Naive thymus-derived CD4-positive, alpha-beta T cell (primary cell): ENCODE measurements at regions of chr15 and their contacts with region 1.

Region 1: GRCh38 chr15:34209421-34210282 is at the start of gene KATNBL1:
- DNase-seq: peak; percentile 81 to 98 (median 89)
- ATAC-seq: peak; percentile 100
- H3K4me3 ChIP-seq: peak within 1 kb of the TSS; percentile 69
- H3K4me3 Mint-ChIP-seq: peak within 1 kb of the TSS; percentile 84 to 94 (median 91)
- H3K27ac ChIP-seq: peak within 1 kb of the TSS; percentile 77
- H3K27ac Mint-ChIP-seq: peak within 1 kb of the TSS; percentile 28 to 93 (median 84)
- H3K4me1 ChIP-seq: peaks cover 0 to 5% of the 10 kb centered on the region in 2 donors
- H3K4me1 Mint-ChIP-seq: peaks cover 8 to 33% (median 25%) of the 10 kb centered on the region in 7 donors
- H3K27me3 ChIP-seq: no peaks in the 10 kb centered on the region
- H3K27me3 Mint-ChIP-seq: peaks cover 0 to 4% (median 0%) of the 10 kb centered on the region in 5 donors
- total RNA-seq, gene KATNBL1: 21.8 to 40.3 (median 33.0) TPM

Region 2: DNA sequence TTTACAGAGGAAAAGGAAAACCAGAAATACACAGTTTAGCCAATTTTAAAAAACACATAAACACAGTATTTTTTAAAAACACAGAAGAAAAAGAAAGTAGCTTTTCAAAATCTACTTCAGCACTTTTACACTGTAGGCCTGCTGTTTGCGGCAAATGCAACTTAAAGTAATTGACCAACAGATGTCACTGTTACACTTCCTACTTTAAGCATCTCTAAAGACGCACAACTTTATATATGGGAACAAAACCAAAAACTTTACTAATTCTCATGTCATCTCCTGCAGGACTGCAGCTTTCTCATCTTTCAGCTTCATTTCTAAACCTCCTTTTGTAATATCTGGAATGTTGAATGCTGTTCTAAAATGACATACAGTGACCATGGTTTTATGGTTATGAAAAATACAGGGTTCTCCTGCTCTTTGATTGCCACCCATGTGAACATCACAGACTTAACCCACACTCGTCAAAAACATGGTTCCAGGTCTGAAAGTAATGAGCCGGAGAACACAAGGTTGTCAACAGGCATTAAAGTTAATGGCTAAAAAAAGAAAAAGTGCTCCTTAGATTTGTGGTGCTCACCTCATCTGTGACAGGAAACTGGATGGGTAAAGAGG is 1123.0 kb before region 1 on chr15:
- CTCF ChIA-PET with region 1: no interaction called
- POLR2A ChIA-PET with region 1: no interaction called
- intact Hi-C with region 1: loop called in 1 of 2 experiments (anchors 10 kb)
- DNase-seq: peak in 5 of 9 donors; percentile 9 to 70 (median 48)
- ATAC-seq: peak; percentile 87
- H3K4me3 ChIP-seq: no peak overlapping the region
- H3K4me3 Mint-ChIP-seq: peak overlapping the region in 4 of 10 donors; percentile 27 to 77 (median 55)
- H3K27ac ChIP-seq: no peak overlapping the region
- H3K27ac Mint-ChIP-seq: peak overlapping the region in 2 of 9 donors; percentile 24 to 87
- H3K4me1 ChIP-seq: no peaks in the 10 kb centered on the region
- H3K4me1 Mint-ChIP-seq: peaks cover 0 to 39% (median 11%) of the 10 kb centered on the region in 7 donors
- H3K27me3 ChIP-seq: no peaks in the 10 kb centered on the region
- H3K27me3 Mint-ChIP-seq: peaks cover 0 to 9% (median 0%) of the 10 kb centered on the region in 5 donors

Region 3: GRCh38 chr15:34038023-34038870 is 171.4 kb before region 1 on chr15:
- CTCF ChIA-PET with region 1: interaction called, 3 read pairs
- POLR2A ChIA-PET with region 1: interaction called, 3 read pairs
- intact Hi-C with region 1: loop called (anchors 1 kb)
- DNase-seq: peak; percentile 52 to 76 (median 72)
- ATAC-seq: peak; percentile 90
- H3K4me3 ChIP-seq: peak overlapping the region; percentile 100
- H3K4me3 Mint-ChIP-seq: peak overlapping the region; percentile 80 to 97 (median 94)
- H3K27ac ChIP-seq: peak overlapping the region; percentile 80
- H3K27ac Mint-ChIP-seq: peak overlapping the region; percentile 87 to 96 (median 94)
- H3K4me1 ChIP-seq: peaks cover 8 to 14% of the 10 kb centered on the region in 2 donors
- H3K4me1 Mint-ChIP-seq: peaks cover 12 to 25% (median 23%) of the 10 kb centered on the region in 7 donors
- H3K27me3 ChIP-seq: no peaks in the 10 kb centered on the region
- H3K27me3 Mint-ChIP-seq: no peaks in the 10 kb centered on the region

Region 4: DNA sequence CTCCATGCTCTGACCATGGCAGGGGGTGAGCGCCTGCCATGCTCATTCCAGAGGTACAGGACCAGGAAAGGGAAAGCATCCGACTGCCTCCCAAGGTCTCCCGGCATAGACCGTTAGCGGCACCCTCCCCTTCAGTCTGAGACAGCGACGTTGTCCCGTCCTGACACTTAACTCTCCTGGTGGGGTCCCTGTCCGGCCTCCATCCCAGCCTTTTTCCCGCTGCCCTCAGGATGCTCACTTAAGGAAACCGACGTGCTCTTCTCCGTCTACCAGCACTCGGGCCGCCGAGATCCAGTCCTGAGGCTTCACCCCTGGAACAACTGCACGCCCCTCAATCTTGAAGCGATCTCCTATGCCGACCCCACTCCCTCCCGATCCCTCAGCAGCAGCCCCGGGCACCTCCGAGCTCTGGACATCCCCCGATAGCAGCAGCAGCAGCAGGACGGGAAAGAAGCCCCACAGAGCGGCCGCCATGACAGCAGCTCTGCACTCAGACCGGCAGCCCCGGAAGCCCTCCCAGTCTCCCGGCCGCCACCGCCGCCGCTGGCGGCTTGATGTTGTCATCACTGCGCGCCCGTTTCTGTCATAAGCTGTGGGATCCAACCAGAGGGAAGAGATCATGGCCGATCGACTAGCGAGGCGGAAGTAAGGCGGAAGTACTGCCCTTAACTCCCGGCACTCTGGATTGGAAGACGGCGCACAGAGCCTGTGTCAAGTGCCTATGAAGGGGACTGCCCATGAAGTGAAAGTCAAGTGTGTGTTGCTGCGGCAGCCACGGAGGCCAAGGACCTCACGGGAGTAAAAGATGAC is 108.1 kb before region 1 on chr15 and contains the starts of genes EMC7 and PGBD4:
- CTCF ChIA-PET with region 1: interaction called, 3 read pairs
- POLR2A ChIA-PET with region 1: interaction called, 8 read pairs
- intact Hi-C with region 1: loop called in 1 of 2 experiments (anchors 1 kb)
- DNase-seq: peak; percentile 98 to 99 (median 99)
- ATAC-seq: peak; percentile 99
- H3K4me3 ChIP-seq: peak within 1 kb of the TSS; percentile 66
- H3K4me3 Mint-ChIP-seq: peak within 1 kb of the TSS; percentile 91 to 100 (median 96)
- H3K27ac ChIP-seq: peak within 1 kb of the TSS; percentile 96
- H3K27ac Mint-ChIP-seq: peak within 1 kb of the TSS; percentile 97 to 100 (median 98)
- H3K4me1 ChIP-seq: peaks cover 16 to 27% of the 10 kb centered on the region in 2 donors
- H3K4me1 Mint-ChIP-seq: peaks cover 15 to 56% (median 45%) of the 10 kb centered on the region in 7 donors
- H3K27me3 ChIP-seq: no peaks in the 10 kb centered on the region
- H3K27me3 Mint-ChIP-seq: peaks cover 0 to 3% (median 0%) of the 10 kb centered on the region in 5 donors
- total RNA-seq, gene EMC7: 30.1 to 65.1 (median 36.9) TPM
- total RNA-seq, gene PGBD4: 3.2 to 6.5 (median 4.2) TPM

Region 5: GRCh38 chr15:34223904-34224596 is 14.4 kb after region 1 on chr15:
- CTCF ChIA-PET with region 1: interaction called, 7 read pairs
- POLR2A ChIA-PET with region 1: interaction called, 8 read pairs
- intact Hi-C with region 1: loop called in 1 of 2 experiments (anchors 1 kb)
- DNase-seq: no peak
- ATAC-seq: no peak
- H3K4me3 ChIP-seq: peak overlapping the region; percentile 82
- H3K4me3 Mint-ChIP-seq: peak overlapping the region; percentile 88 to 100 (median 94)
- H3K27ac ChIP-seq: peak overlapping the region; percentile 83
- H3K27ac Mint-ChIP-seq: peak overlapping the region; percentile 93 to 100 (median 99)
- H3K4me1 ChIP-seq: peaks cover 5 to 13% of the 10 kb centered on the region in 2 donors
- H3K4me1 Mint-ChIP-seq: peaks cover 9 to 35% (median 30%) of the 10 kb centered on the region in 7 donors
- H3K27me3 ChIP-seq: no peaks in the 10 kb centered on the region
- H3K27me3 Mint-ChIP-seq: peaks cover 0 to 5% (median 0%) of the 10 kb centered on the region in 5 donors

Region 6: DNA sequence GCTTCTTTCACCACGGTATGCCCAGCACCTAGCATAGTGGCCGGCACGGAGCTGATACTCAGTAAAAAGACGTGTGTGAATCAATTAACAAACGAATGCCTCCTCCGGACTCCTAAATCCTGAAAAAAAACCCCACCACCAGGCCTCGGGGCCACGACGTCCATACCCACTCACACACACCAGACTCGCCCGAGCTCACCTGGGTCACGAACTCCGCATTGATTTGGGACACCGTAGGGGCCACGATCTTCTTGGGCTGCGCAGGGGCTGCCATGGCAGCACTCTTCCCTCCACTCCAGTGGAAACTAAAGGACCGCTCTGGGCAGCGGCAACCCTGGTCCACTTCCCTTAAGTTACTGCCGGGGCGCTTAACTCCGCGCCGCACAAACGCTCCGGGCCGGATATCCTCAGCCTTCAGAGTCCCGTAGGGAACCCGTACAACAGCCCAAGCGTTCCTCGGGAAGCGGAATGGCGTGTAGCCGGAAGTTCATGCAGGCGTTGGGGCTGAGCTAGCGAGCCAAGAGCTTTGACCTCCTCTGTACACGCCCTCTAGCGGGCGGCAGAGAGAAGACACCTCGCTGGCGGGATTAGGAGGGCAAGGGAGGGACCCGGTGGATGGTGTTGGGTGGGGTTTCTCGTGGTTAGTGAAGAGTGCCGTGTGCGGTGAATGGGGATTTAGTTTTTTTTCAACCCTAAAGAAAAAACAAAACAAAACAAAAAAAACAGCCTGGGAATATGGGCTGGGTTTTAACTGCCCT is 759.9 kb after region 1 on chr15 and contains the start of gene AQR:
- CTCF ChIA-PET with region 1: no interaction called
- POLR2A ChIA-PET with region 1: no interaction called
- intact Hi-C with region 1: loop called in 1 of 2 experiments (anchors 5 kb)
- DNase-seq: peak; percentile 74 to 91 (median 85)
- ATAC-seq: peak; percentile 98
- H3K4me3 ChIP-seq: peak within 1 kb of the TSS; percentile 99
- H3K4me3 Mint-ChIP-seq: peak within 1 kb of the TSS; percentile 92 to 99 (median 98)
- H3K27ac ChIP-seq: peak within 1 kb of the TSS; percentile 83
- H3K27ac Mint-ChIP-seq: peak within 1 kb of the TSS; percentile 88 to 100 (median 95)
- H3K4me1 ChIP-seq: peaks cover 10 to 15% of the 10 kb centered on the region in 2 donors
- H3K4me1 Mint-ChIP-seq: peaks cover 30 to 56% (median 51%) of the 10 kb centered on the region in 7 donors
- H3K27me3 ChIP-seq: no peaks in the 10 kb centered on the region
- H3K27me3 Mint-ChIP-seq: no peaks in the 10 kb centered on the region
- total RNA-seq, gene AQR: 38.1 to 43.5 (median 41.3) TPM

Region 7: DNA sequence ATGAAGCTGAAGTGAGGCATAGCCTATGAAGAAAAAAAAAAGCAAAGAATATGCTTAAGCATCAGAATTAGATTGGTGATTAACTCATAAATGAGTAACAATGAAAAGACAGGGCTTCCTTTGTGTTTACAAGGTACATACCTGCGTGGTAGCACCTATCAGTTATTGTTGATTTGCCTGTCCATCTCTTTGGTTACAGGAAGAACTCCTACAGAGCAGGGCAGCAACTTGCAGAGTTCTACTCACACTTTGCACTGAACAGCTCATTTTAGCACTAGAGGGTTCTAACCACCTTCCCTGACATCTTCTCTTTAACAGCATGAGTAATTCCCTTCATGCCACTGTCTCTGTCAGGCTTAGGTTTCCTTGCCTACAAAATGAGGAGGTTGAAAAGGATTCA is 1170.3 kb after region 1 on chr15:
- CTCF ChIA-PET with region 1: no interaction called
- POLR2A ChIA-PET with region 1: no interaction called
- intact Hi-C with region 1: no loop called
- DNase-seq: no peak
- ATAC-seq: no peak
- H3K4me3 ChIP-seq: no peak overlapping the region
- H3K4me3 Mint-ChIP-seq: no peak overlapping the region
- H3K27ac ChIP-seq: no peak overlapping the region
- H3K27ac Mint-ChIP-seq: no peak overlapping the region
- H3K4me1 ChIP-seq: no peaks in the 10 kb centered on the region
- H3K4me1 Mint-ChIP-seq: no peaks in the 10 kb centered on the region
- H3K27me3 ChIP-seq: no peaks in the 10 kb centered on the region
- H3K27me3 Mint-ChIP-seq: no peaks in the 10 kb centered on the region